Cardiac septum (tissue), 1 donor: ENCODE measurements at regions of chr2 and their contacts with region 1.

Region 1: DNA sequence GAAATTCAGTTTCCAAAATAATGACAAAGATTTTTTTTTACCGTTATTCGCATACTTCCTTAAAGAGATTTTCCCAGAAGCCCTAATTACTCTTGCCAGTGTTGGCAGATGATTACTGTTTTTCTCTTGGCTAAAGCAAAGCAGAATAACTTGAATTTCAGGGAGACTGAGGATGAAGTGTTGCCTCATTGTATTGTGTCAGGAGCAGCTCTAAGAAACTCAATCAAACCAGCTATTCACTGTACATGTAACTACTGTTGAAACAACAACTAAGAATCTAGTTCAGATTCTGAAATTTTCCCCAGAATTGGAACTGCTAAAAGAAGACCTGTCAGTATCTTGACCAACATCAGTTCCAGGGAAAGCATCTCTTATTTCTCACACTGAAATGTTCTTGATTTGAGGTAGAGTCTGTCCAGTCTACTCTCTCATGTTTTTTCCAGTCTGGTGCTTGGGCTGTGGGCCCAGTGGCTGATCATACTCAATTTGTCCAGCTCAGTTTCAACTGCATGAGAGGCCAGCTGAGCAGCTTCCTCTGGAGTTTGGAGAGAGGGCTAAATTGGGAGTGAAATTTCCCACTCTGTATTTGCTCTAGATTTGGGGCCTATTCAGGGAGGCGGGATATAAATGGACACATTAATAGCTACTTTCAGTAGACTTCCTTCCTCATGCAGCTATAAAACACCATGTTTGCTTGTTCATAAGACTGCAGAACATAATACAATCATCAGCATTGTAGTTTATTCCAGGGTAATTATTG is 78.5 kb downstream of the PPP1R1C start:
- DNase-seq: no peak

Region 2: GRCh38 chr2:181891966-181892798 is 172.0 kb before region 1 on chr2:
- intact Hi-C with region 1: loop called (anchors 5 kb)
- DNase-seq: peak; percentile 88

Region 3: GRCh38 chr2:181984814-181985631 is 79.2 kb before region 1 on chr2:
- intact Hi-C with region 1: loop called (anchors 5 kb)
- DNase-seq: no peak

Region 4: DNA sequence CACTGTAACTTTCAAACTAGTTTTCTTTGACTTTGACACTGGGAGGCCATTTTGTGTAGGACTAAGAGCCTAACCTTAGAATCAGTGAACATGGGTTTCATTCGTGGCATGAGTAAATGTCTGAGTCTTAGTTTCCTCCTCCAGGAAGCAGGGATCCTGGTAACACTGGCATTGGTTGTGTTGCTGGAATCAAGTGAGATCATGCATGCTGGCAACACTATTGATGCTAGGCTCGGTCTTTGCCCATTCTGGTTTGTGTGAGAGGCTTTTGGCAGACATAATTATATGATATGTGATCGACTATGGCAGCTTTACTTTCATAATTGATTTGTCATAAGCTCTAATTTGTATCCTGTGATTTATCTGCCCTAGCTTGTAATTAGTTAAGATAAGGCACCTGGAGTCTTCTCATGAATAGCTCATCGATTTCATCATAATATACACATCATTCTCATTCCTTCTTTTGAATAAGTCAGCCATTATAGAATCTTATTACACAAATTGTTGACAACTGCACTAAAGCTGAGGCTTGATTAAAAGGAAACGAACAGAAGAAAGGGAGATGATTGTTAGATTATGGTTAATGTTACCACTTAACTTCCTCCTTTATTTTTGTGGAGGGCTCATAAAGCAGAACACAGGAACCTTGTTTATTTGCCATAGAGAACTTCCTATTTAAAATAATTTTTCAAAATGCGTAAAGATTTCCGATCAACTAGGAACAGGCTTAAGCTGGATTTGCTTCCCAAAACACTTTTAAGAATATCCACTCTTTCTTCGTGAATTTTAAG is 66.0 kb before region 1 on chr2:
- intact Hi-C with region 1: no loop called
- DNase-seq: no peak

Region 5: GRCh38 chr2:182088681-182089320 is 24.6 kb after region 1 on chr2:
- intact Hi-C with region 1: no loop called
- DNase-seq: no peak

Region 6: GRCh38 chr2:182391443-182391842 is 327.2 kb after region 1 on chr2:
- intact Hi-C with region 1: no loop called
- DNase-seq: no peak

Region 7: DNA sequence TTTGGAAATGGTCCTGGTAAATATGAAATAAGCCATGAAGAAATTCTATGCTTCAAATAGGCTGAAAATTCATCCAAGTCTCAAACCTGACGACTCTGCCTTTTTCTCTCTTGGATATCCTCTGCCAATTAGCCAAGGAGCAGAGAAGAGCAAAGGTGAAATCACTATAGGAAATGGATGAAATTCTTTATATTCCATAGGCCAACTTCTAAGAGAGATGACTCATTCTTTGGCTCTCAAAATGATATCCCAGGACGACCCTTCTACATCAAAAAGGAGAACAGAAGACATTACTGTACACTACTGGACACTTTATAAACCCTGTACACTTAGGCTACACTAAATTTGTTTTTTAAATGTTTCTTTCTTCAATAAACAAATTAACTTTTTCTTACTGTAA is 339.9 kb after region 1 on chr2:
- intact Hi-C with region 1: no loop called
- DNase-seq: no peak